Esophagus muscularis mucosa (tissue), 4 donors: ENCODE measurements at regions of chr18 and their contacts with region 1.

Region 1: GRCh38 chr18:56748698-56749268 is 97.6 kb downstream of the WDR7 start:
- DNase-seq: no peak
- H3K4me3 ChIP-seq: no peak overlapping the region
- H3K27ac ChIP-seq: no peak overlapping the region
- H3K4me1 ChIP-seq: peaks cover 0 to 4% (median 0%) of the 10 kb centered on the region in 4 donors
- H3K27me3 ChIP-seq: no peaks in the 10 kb centered on the region
- CTCF ChIP-seq: peak; percentile 52 to 63 (median 54)
- EP300 ChIP-seq: no peak
- POLR2A ChIP-seq: no peak

Region 2: DNA sequence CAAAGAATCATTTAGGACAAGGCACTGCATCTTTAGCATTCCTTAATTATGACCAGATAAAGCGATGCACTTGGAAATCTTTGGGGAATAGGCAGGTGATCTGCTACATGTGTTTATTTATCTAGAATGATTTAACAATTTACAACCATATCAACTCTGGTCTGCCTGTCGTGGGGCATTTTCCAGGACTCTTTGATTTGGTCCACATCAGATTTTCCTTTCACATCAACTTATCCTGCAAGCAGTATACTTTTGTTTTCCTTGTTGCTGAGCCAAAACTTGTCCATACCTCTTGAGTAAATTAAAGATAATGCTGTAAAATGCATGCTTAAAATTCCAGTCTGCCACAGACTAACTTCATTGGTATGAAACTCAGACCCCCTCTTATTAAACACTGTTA is 848.4 kb before region 1 on chr18:
- intact Hi-C with region 1: no loop called
- DNase-seq: no peak
- H3K4me3 ChIP-seq: no peak overlapping the region
- H3K27ac ChIP-seq: no peak overlapping the region
- H3K4me1 ChIP-seq: no peaks in the 10 kb centered on the region
- H3K27me3 ChIP-seq: no peaks in the 10 kb centered on the region
- CTCF ChIP-seq: no peak
- EP300 ChIP-seq: no peak
- POLR2A ChIP-seq: no peak

Region 3: GRCh38 chr18:57035590-57035989 is 286.8 kb after region 1 on chr18:
- intact Hi-C with region 1: no loop called
- DNase-seq: peak; percentile 86
- H3K4me3 ChIP-seq: no peak overlapping the region
- H3K27ac ChIP-seq: no peak overlapping the region
- H3K4me1 ChIP-seq: no peaks in the 10 kb centered on the region
- H3K27me3 ChIP-seq: no peaks in the 10 kb centered on the region
- CTCF ChIP-seq: no peak
- EP300 ChIP-seq: no peak
- POLR2A ChIP-seq: no peak

Region 4: GRCh38 chr18:57561728-57562423 is 813.1 kb after region 1 on chr18:
- intact Hi-C with region 1: loop called (anchors 5 kb)
- DNase-seq: no peak
- H3K4me3 ChIP-seq: no peak overlapping the region
- H3K27ac ChIP-seq: no peak overlapping the region
- H3K4me1 ChIP-seq: no peaks in the 10 kb centered on the region
- H3K27me3 ChIP-seq: no peaks in the 10 kb centered on the region
- CTCF ChIP-seq: peak; percentile 70 to 81 (median 74)
- EP300 ChIP-seq: no peak
- POLR2A ChIP-seq: no peak